H1 (cell line): ENCODE measurements at regions of chr2 and their contacts with region 1.

Region 1: GRCh38 chr2:172084734-172085459 is 410 bp upstream of the DLX1 start:
- DNase-seq: peak in 1 of 2 experiments; percentile 88
- H3K4me3 ChIP-seq: peak overlapping the region; percentile 40 to 66 (median 53)
- H3K27ac ChIP-seq: no peak overlapping the region
- H3K4me1 ChIP-seq: peaks cover 2 to 61% (median 31%) of the 10 kb centered on the region in 4 experiments
- H3K27me3 ChIP-seq: peaks cover 93 to 100% (median 99%) of the 10 kb centered on the region in 4 experiments
- CTCF ChIP-seq: no peak
- EP300 ChIP-seq: no peak
- POLR2A ChIP-seq: no peak
- RAD21 ChIP-seq: no peak

Region 2: GRCh38 chr2:172095146-172095904 is 10.4 kb after region 1 on chr2:
- CTCF ChIA-PET with region 1: interaction called, 198 read pairs
- POLR2A ChIA-PET with region 1: interaction called, 184 read pairs
- DNase-seq: peak in 1 of 2 experiments; percentile 80
- H3K4me3 ChIP-seq: peak overlapping the region; percentile 8 to 57 (median 32)
- H3K27ac ChIP-seq: no peak overlapping the region
- H3K4me1 ChIP-seq: peaks cover 2 to 36% (median 20%) of the 10 kb centered on the region in 4 experiments
- H3K27me3 ChIP-seq: peaks cover 90 to 100% (median 96%) of the 10 kb centered on the region in 4 experiments
- CTCF ChIP-seq: no peak
- EP300 ChIP-seq: no peak
- POLR2A ChIP-seq: no peak
- RAD21 ChIP-seq: no peak

Region 3: GRCh38 chr2:172102391-172103278 is 17.7 kb after region 1 on chr2 and contains the start of gene DLX2:
- CTCF ChIA-PET with region 1: interaction called, 198 read pairs
- POLR2A ChIA-PET with region 1: interaction called, 184 read pairs
- DNase-seq: peak; percentile 86 to 92
- H3K4me3 ChIP-seq: peak within 1 kb of the TSS; percentile 33 to 59 (median 46)
- H3K27ac ChIP-seq: no peak within 1 kb of the TSS
- H3K4me1 ChIP-seq: peaks cover 6 to 43% (median 21%) of the 10 kb centered on the region in 4 experiments
- H3K27me3 ChIP-seq: peaks cover 78 to 100% (median 93%) of the 10 kb centered on the region in 4 experiments
- CTCF ChIP-seq: no peak
- EP300 ChIP-seq: no peak
- POLR2A ChIP-seq: no peak
- RAD21 ChIP-seq: no peak
- total RNA-seq, gene DLX2: 0.13 and 0.45 TPM in 2 replicates